HCT116 (cell line): ENCODE measurements at regions of chr3 and their contacts with region 1.

Region 1: GRCh38 chr3:11835028-11835639 is 11.6 kb downstream of the TAMM41 start:
- DNase-seq: no peak
- ATAC-seq: no peak; the same call in 1 of the 2 replicates
- H3K4me3 ChIP-seq: no peak overlapping the region
- H3K27ac ChIP-seq: no peak overlapping the region
- H3K4me1 ChIP-seq: no peaks in the 10 kb centered on the region
- H3K27me3 ChIP-seq: no peaks in the 10 kb centered on the region
- CTCF ChIP-seq: peak; percentile 33 to 61 (median 45); a peak in 5 of 6 replicates
- POLR2A ChIP-seq: no peak
- RAD21 ChIP-seq: peak; percentile 68

Region 2: GRCh38 chr3:11236595-11237461 is 598.3 kb before region 1 on chr3:
- CTCF ChIA-PET with region 1: no interaction called
- POLR2A ChIA-PET with region 1: no interaction called
- RAD21 ChIA-PET with region 1: no interaction called
- intact Hi-C with region 1: loop called (anchors 10 kb)
- DNase-seq: peak; percentile 64
- ATAC-seq: peak; percentile 88
- H3K4me3 ChIP-seq: no peak overlapping the region
- H3K27ac ChIP-seq: no peak overlapping the region
- H3K4me1 ChIP-seq: peaks cover 3 to 41% of the 10 kb centered on the region in 2 experiments
- H3K27me3 ChIP-seq: no peaks in the 10 kb centered on the region
- CTCF ChIP-seq: peak; percentile 65 to 94 (median 78)
- POLR2A ChIP-seq: no peak
- RAD21 ChIP-seq: peak; percentile 73